Astrocyte of the cerebellum (primary cell): ENCODE measurements at regions of chr3 and their contacts with region 1.

Region 1: DNA sequence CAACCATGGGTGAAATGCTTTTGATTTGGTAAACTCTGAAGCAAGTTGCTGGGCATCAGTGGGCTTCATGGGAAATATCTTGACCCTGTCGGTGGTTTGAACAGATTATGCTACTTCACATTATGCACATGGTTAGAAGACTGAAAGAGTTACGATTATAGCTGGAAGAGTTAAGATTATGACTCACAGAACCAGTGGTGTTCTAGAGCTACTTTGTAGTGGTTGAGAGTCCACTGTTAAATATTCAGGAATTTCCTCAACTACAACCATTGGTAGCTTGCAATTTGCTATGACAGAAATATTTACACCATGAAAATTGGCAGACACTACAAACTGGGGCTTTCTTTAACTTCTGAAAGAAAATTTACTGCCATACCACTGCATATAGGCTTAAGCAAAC is 99.3 kb downstream of the GADL1 start:
- DNase-seq: peak; percentile 63
- H3K4me3 ChIP-seq: no peak overlapping the region
- CTCF ChIP-seq: no peak

Region 2: DNA sequence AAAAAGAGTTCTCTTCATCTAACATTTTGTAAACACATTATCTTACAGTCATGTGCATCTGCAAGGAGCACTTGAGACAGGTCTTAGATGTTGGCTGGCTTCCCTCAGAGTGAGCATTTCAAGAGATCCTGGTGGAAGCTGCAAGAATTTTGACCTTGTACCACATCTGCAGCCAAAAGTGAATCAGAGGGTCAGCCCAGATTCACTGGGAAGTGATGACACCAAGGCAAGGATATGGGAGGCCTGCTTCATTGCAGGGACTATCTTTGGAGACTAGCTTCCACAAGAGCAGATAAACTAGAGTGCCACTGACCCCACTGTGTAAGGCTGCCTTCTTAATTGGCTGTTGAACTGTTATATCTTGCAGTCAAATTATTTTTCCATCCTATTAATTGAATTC is 120.6 kb after region 1 on chr3:
- in situ Hi-C with region 1: loop called (anchors 10 kb)
- DNase-seq: no peak
- H3K4me3 ChIP-seq: no peak overlapping the region
- CTCF ChIP-seq: no peak

Region 3: DNA sequence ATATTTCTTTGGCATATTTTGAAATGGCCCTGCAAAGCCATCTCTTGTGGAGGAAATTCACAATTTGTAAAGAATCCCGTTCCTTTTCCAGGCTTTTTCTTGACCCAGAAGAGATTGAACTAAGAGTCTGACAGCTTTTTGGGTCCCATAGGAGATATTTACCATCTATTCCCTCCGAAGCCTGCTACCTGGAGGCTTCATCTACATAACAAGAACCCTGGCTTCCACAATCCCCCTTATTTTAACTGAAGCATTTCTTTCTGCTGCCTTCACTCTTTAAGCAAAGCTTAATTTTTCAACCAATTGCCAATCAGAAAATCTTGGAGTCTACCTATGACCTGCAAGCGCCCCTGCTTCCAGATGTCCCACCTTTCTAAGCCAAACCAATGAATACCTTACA is 347.4 kb after region 1 on chr3:
- in situ Hi-C with region 1: no loop called
- DNase-seq: no peak
- H3K4me3 ChIP-seq: no peak overlapping the region
- CTCF ChIP-seq: no peak